ENCODE measurements at regions of chr1 and their contacts with region 1.

Region 1: DNA sequence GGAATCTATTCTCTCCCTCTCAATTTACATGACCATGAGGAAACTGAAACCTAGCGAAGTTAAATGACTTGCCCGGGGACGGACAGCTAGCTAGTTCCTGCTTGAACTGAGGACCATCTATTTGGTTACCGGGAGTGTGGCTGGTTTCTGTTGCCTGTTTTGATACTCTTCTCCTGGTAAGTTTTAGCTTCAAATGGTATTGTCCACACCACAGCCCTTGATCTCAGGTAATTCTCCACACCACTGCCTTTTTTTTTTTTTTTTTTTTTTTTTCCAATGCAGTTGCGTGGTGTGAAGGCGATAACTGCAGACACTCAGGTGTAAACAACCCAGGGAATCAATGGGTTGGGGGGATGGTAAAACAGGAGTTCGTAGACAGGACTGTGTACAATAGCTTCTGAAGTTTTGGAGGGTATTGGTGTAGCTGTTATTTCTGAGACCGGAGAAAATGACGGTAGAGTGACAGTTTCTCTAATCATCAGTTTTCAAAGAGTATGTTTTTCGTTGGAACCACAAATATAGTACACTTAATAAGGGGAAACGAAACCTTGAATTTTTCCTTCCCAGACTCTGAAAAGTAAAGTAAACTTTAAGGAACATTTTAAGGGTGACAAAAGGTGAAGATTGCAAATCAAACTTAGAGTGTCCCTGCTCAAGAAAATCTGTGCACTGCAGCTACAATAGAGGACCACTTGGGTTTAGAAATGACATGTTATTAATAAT is 125.3 kb upstream of the CACYBP start:
- DNase-seq: no peak

Region 2: GRCh38 chr1:174519844-174520243 is 354.6 kb before region 1 on chr1:
- intact Hi-C with region 1: no loop called
- DNase-seq: peak in 4 of 10 donors; percentile 15 to 67 (median 24)

Region 3: GRCh38 chr1:174663358-174663757 is 211.1 kb before region 1 on chr1:
- intact Hi-C with region 1: no loop called
- DNase-seq: no peak

Region 4: GRCh38 chr1:174976436-174977108 is 102.1 kb after region 1 on chr1:
- intact Hi-C with region 1: loop called (anchors 5 kb)
- DNase-seq: peak in 1 of 10 donors; percentile 72